SK-N-SH (cell line): ENCODE measurements at regions of chr9 and their contacts with region 1.

Region 1: DNA sequence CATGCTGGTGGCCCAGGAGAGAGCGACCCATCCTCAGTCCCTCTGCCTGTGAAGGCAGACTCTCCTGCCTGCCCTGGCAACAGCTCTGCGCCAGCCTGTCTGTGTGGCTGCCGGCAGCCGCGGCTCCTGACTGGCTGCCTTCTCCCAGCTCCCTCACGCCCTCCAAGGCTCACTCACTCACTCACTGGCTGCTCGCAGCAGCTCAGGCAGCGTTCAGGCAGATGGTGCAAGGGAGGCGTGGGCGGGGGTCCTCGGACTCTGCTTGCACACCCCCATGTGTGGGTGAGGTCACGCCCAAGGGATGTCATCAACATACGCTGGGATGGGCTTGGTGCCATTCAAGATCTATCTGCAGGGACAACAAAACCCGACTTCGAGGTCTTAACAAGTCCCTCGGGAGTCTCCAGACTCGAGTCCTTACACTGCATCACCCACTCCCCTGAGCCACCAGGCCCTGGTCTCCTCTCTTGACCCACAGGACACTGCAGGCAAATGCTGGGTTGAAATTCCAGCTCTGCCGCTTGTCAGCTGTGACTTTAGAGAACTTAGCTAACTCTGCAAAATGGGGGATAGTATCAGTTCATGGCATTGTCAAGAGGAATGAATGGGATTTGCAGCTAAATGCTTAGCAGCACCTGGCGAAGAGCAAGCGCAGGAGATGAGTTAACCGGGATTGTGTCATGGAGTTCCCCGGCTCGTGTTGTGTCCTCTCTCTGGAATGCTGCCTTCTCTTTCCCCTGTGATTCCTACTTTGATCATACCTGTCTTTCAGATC is 66.8 kb downstream of the DAB2IP start:
- DNase-seq: peak; percentile 81
- H3K4me3 ChIP-seq: no peak overlapping the region
- H3K27ac ChIP-seq: peak overlapping the region in 1 of 2 experiments; percentile 97; a peak in 2 of 4 replicates
- H3K4me1 ChIP-seq: peaks cover 0 to 86% of the 10 kb centered on the region in 2 experiments; a peak in 2 of 4 replicates
- H3K27me3 ChIP-seq: no peaks in the 10 kb centered on the region
- CTCF ChIP-seq: no peak
- EP300 ChIP-seq: peak in 1 of 2 experiments; percentile 50; a peak in 1 of 4 replicates
- RAD21 ChIP-seq: no peak

Region 2: DNA sequence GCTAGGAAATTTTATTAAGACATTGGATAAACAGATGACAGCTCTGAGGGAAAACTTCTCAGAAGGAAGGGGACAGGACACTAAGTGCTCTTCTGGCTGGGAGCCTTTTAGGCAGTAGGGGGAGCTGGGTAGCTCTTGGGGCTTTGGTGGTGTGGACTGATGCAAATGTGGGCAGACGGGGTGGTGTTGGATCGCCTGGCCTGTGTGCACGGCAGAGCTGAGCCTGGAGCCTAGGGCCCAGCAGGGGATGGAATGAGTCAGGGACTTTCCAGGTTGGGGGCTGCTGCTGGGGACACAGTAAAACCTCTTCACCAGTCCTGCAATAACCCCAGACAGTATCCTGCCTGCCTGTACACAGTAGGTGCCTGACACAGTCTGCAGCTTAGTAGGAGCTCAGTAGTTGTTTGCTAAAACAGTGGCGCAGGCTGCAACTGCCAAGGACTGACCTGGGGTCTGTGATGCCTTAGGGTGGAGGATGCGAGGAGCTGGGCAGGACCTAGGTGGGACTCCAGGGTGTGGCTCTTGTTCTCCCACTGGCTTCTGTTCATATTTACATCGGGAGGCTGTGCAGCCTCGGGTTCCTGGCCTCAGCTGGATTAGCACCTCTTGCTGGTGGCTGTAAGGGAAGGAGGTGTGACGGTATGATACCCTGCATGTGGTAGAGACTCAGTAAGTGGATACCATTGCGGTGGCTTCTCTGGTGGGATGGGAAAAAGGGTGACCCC is 17.0 kb after region 1 on chr9:
- CTCF ChIA-PET with region 1: interaction called, 11 read pairs
- POLR2A ChIA-PET with region 1: no interaction called
- DNase-seq: no peak
- H3K4me3 ChIP-seq: no peak overlapping the region
- H3K27ac ChIP-seq: no peak overlapping the region
- H3K4me1 ChIP-seq: peaks cover 15 to 77% of the 10 kb centered on the region in 2 experiments; a peak in 3 of 4 replicates
- H3K27me3 ChIP-seq: no peaks in the 10 kb centered on the region
- CTCF ChIP-seq: peak; percentile 54
- EP300 ChIP-seq: no peak
- RAD21 ChIP-seq: 0 out of 2 replicates have a peak, but pooled peaks have one; percentile 35